ENCODE measurements at regions of chr15 and their contacts with region 1.

Region 1: DNA sequence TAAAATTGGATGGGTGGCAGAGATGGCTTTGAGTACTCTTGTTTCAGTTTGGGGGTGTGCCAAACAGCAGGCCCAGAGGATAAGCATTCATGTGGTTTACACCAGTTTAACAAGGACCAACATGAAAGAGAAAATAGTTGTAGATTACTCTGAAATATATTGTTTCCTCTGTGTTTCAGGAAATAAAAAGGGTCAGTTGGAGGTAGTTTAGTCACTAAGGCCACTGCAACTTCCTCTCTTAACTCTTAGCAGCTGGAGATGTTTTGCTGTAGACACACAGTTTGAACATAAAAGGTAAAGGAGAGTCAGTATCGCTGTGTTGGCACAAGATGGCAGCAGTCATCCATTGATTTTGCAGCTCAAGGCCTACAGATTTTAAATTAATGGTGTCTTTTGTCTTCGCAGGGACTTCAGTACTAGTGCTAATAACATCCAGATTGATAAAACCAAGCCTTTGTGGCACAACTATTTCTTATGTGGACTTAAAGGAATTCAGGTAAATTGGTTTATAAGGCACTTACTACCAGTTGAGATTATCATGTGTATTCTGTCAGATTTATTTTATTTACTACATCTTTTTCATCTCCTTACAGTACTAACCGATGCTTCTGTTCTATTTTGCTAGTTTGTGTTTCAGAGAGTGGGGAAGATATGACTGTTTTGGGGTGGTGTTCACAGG is 65.5 kb downstream of the GALK2 start:
- DNase-seq: peak in 1 of 2 experiments; percentile 59
- H3K4me3 ChIP-seq: no peak overlapping the region
- H3K27ac ChIP-seq: no peak overlapping the region
- H3K4me1 ChIP-seq: 0 out of 7 replicates have a peak, but pooled peaks cover 0 to 2% (median 0%) of the 10 kb centered on the region in 4 experiments
- H3K27me3 ChIP-seq: no peaks in the 10 kb centered on the region
- CTCF ChIP-seq: peak in 2 of 3 experiments; percentile 80 to 88; a peak in 3 of 4 replicates
- EP300 ChIP-seq: no peak
- POLR2A ChIP-seq: no peak
- RAD21 ChIP-seq: peak; percentile 95 to 97

Region 2: GRCh38 chr15:49270541-49271421 is 35.2 kb after region 1 on chr15:
- CTCF ChIA-PET with region 1: interaction called, 11 read pairs
- POLR2A ChIA-PET with region 1: no interaction called
- DNase-seq: no peak
- H3K4me3 ChIP-seq: no peak overlapping the region
- H3K27ac ChIP-seq: no peak overlapping the region
- H3K4me1 ChIP-seq: peaks cover 0 to 6% (median 4%) of the 10 kb centered on the region in 4 experiments; a peak in 4 of 7 replicates
- H3K27me3 ChIP-seq: no peaks in the 10 kb centered on the region
- CTCF ChIP-seq: no peak
- EP300 ChIP-seq: no peak
- POLR2A ChIP-seq: no peak
- RAD21 ChIP-seq: no peak